G401 (cell line): ENCODE measurements at regions of chr17 and their contacts with region 1.

Region 1: GRCh38 chr17:74807925-74808324 is 31.8 kb upstream of the NAT9 start:
- DNase-seq: peak; percentile 96

Region 2: GRCh38 chr17:74849932-74850709 is 42.2 kb after region 1 on chr17:
- in situ Hi-C with region 1: loop called (anchors 5 kb)
- DNase-seq: no peak

Region 3: DNA sequence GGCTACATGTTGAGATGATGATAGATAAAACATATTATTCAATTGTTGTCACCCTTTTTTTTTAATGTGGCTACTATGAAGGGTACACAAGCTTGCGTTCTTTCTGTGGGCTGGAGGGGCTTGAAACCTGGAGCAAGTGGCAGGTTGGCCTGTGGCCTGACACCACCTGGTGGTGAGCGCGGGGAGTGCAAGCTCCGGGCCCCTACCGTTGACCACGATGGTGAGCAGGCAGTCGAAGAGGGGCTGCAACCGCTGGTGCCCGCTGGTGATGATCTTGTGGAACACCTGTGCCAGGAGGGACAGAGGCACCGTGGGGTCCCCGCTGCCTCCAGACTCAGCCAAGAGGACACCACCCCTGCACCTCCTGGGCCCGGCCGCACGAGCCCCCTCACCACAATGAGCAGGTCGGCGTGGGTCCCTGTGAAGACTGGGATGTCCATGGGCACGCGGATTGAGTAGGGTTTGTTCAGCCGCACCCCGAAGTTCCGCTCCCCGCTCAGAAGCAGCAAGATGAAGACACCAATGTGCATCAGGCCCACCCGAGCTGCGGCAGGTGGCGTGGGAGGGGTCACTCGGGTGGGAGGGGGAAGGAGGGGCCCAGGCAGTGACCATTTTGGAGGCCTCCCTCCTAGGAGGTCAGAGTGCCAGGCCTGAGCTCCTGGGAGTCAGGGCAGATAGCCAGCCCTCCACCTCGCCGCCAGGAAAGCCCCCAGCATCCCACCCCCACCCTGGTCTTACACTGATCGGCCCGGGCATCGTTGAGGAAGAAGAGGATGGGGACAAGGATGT is 150.2 kb after region 1 on chr17:
- in situ Hi-C with region 1: loop called (anchors 10 kb)
- DNase-seq: peak; percentile 67